Caco-2 (cell line): ENCODE measurements at regions of chr17 and their contacts with region 1.

Region 1: DNA sequence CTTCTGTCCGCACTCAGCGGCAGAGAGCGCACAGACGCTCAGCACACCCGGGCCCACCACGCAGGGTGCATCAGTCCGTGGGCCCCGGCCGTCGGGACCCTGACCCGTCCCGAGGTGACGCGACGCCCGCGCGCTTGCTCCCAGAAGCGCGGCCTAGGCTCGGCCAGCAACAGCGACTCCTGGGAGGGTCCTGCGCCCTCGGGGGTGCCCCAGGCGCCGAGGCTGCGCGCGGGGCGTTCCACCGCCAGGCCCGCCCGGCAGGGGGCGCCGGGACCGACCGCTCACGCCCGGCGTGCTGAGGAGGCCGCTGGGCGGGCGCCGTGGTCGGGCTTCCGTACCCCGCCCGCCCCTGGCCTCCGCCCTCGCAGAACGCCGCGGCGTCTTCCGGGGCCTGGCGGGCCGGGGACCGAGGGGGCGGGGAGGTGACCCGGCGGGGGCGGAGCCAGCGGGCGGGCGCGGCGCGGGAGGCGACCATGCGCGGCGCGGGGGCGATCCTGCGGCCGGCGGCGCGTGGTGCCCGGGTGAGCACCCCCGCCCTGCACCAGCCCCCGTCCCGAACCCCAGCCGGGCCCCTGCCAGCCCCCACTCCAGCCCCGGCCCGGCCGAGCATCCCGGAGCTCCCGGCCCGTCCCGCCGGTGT is at the start of gene CISD3:
- DNase-seq: peak; percentile 84 to 95
- H3K4me3 ChIP-seq: peak within 1 kb of the TSS; percentile 64
- H3K4me3 Mint-ChIP-seq: peak within 1 kb of the TSS; percentile 89
- H3K27ac Mint-ChIP-seq: peak within 1 kb of the TSS; percentile 85
- H3K4me1 ChIP-seq: peaks cover 20% of the 10 kb centered on the region
- H3K4me1 Mint-ChIP-seq: peaks cover 15% of the 10 kb centered on the region
- H3K27me3 ChIP-seq: no peaks in the 10 kb centered on the region
- H3K27me3 Mint-ChIP-seq: no peaks in the 10 kb centered on the region
- CTCF ChIP-seq: peak; percentile 32 to 74
- total RNA-seq, gene CISD3: 16.6 and 18.3 TPM in 2 replicates

Region 2: DNA sequence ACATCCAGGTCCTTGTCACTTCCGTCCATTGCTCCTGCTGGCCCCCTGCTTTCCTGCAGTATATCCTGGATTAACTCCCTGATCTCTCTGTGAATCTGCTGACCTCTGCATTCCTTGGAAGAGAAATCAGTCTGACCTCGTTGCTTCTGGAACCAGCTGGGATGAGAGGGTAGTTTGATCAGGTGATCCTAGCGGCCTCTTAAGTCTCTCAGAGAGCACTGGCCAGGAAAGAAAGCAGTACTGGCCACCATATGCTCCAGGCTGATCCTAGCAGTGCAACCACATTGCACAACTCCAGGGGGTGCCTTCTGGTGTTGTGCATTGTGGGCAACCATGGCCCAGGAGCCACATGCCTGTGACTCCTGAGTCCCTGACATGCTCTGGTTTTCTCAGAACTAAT is 222.6 kb before region 1 on chr17:
- CTCF ChIA-PET with region 1: no interaction called
- POLR2A ChIA-PET with region 1: no interaction called
- intact Hi-C with region 1: no loop called
- DNase-seq: no peak
- H3K4me3 ChIP-seq: no peak overlapping the region
- H3K4me3 Mint-ChIP-seq: no peak overlapping the region
- H3K27ac Mint-ChIP-seq: no peak overlapping the region
- H3K4me1 ChIP-seq: peaks cover 18% of the 10 kb centered on the region
- H3K4me1 Mint-ChIP-seq: peaks cover 14% of the 10 kb centered on the region
- H3K27me3 ChIP-seq: peaks cover 1% of the 10 kb centered on the region
- H3K27me3 Mint-ChIP-seq: peaks cover 9% of the 10 kb centered on the region
- CTCF ChIP-seq: no peak

Region 3: DNA sequence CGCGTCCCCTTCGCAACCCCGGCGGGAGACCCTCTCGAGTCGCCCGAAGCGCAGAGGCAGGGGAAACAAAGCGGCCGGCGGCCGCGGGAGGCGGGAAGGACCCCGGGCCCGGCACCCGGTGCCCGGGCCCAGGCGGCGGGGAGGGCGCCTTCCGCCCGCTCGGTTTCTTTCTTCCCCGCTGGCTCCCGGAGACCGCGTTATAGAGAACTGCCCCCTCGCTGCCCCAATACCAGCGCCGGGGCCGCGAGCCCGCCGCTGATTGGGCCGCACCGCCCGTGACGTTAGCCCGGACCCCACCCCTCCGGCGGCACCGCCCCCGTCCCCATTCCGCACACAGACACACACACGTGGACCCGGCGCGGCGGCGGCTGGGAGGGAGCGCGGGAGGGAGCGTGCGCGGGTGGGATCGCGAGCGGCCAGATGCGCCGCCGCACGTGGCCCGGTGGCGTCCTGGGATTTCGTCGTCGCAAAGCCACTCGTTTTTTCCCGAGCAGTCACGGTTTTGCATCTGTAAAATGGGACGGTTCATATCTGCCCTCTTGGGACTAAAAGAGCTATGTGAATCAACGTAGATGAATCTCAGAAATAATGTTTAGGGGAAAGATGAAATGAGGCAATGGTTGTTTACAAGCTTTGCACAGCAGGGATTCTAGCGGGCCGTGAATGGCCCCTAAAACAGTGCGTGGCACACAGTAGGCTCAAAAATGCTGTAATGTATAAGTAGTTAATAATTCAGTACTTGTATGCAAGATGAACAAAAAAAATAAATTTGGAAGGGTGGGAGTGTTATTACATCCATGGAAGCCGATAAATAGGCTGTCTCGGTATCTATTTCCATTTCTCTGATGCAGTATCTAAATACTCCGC is 55.0 kb before region 1 on chr17 and contains the start of gene EPOP:
- CTCF ChIA-PET with region 1: interaction called, 19 read pairs
- POLR2A ChIA-PET with region 1: no interaction called
- intact Hi-C with region 1: loop called (anchors 1 kb)
- DNase-seq: peak; percentile 93 to 96
- H3K4me3 ChIP-seq: peak within 1 kb of the TSS; percentile 90
- H3K4me3 Mint-ChIP-seq: peak within 1 kb of the TSS; percentile 71
- H3K27ac Mint-ChIP-seq: peak within 1 kb of the TSS; percentile 98
- H3K4me1 ChIP-seq: peaks cover 41% of the 10 kb centered on the region
- H3K4me1 Mint-ChIP-seq: peaks cover 25% of the 10 kb centered on the region
- H3K27me3 ChIP-seq: no peaks in the 10 kb centered on the region
- H3K27me3 Mint-ChIP-seq: no peaks in the 10 kb centered on the region
- CTCF ChIP-seq: no peak
- total RNA-seq, gene EPOP: 17.1 and 19.1 TPM in 2 replicates

Region 4: DNA sequence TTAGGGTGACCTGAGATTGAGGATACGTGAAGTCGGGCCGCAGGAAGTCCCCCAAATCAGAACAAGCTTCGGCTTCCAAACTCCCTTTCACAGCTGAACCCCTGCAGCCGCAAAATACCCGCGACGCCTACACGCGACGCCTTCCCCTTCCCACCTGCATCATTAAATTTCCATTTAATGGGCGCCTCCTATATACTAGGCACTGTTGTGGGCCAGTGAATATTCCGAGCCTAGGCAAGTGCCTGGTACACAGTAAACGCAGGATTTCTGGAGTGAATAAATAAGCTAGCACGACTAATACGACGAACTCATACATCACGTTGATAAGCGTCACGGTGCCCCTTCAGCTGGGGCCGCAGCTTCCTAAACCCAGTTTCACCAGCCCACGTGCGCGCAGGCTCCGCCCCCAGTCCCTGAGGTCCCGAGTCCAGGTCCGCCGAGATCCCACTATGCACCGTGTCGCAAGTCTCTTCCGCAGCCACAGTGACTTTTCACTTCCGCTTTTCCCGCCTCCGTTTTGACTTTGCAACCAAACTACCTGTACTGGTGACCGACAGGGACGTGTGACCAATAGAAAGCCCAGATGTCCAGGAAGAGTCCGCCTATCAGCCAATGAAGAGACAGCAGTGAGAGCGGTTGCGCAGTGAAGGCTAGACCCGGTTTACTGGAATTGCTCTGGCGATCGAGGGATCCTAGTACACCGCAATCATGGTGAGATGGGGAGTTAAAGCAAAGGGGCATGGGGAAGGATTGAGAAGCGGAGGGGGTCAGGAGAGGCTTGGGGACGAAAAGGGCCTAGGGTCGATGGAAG is 22.3 kb after region 1 on chr17 and contains the start of gene PSMB3:
- CTCF ChIA-PET with region 1: interaction called, 11 read pairs
- POLR2A ChIA-PET with region 1: no interaction called
- intact Hi-C with region 1: loop called (anchors 2 kb)
- DNase-seq: peak; percentile 98 to 100
- H3K4me3 ChIP-seq: peak within 1 kb of the TSS; percentile 90
- H3K4me3 Mint-ChIP-seq: peak within 1 kb of the TSS; percentile 79
- H3K27ac Mint-ChIP-seq: peak within 1 kb of the TSS; percentile 80
- H3K4me1 ChIP-seq: peaks cover 13% of the 10 kb centered on the region
- H3K4me1 Mint-ChIP-seq: peaks cover 18% of the 10 kb centered on the region
- H3K27me3 ChIP-seq: no peaks in the 10 kb centered on the region
- H3K27me3 Mint-ChIP-seq: peaks cover 2% of the 10 kb centered on the region
- CTCF ChIP-seq: no peak
- total RNA-seq, gene PSMB3: 427 and 465 TPM in 2 replicates

Region 5: GRCh38 chr17:38912221-38912813 is 182.3 kb after region 1 on chr17:
- CTCF ChIA-PET with region 1: no interaction called
- POLR2A ChIA-PET with region 1: no interaction called
- intact Hi-C with region 1: no loop called
- DNase-seq: peak in 1 of 2 experiments; percentile 24
- H3K4me3 ChIP-seq: no peak overlapping the region
- H3K4me3 Mint-ChIP-seq: no peak overlapping the region
- H3K27ac Mint-ChIP-seq: peak overlapping the region; percentile 18
- H3K4me1 ChIP-seq: peaks cover 9% of the 10 kb centered on the region; the same call in 1 of the 2 replicates
- H3K4me1 Mint-ChIP-seq: no peaks in the 10 kb centered on the region
- H3K27me3 ChIP-seq: no peaks in the 10 kb centered on the region
- H3K27me3 Mint-ChIP-seq: no peaks in the 10 kb centered on the region
- CTCF ChIP-seq: no peak